Dorsolateral prefrontal cortex (tissue), 120 donors: ENCODE measurements at regions of chr19 and their contacts with region 1.

Region 1: GRCh38 chr19:57632987-57633831 is at the start of gene ZNF211:
- DNase-seq: peak; percentile 90 to 96 (median 94)
- H3K4me3 ChIP-seq: peak within 1 kb of the TSS; percentile 68 to 99 (median 90)
- H3K27ac ChIP-seq: peak within 1 kb of the TSS in 57 of 59 donors; percentile 33 to 92 (median 80)
- H3K27me3 ChIP-seq: no peaks in the 10 kb centered on the region
- CTCF ChIP-seq: peak in 46 of 56 donors; percentile 7 to 63 (median 40)
- total RNA-seq, gene ZNF211: 14.6 to 37.0 (median 23.5) TPM

Region 2: GRCh38 chr19:57566396-57567265 is 66.6 kb before region 1 on chr19:
- intact Hi-C with region 1: no loop called
- DNase-seq: no peak
- H3K4me3 ChIP-seq: no peak overlapping the region
- H3K27ac ChIP-seq: no peak overlapping the region
- H3K27me3 ChIP-seq: no peaks in the 10 kb centered on the region
- CTCF ChIP-seq: no peak

Region 3: DNA sequence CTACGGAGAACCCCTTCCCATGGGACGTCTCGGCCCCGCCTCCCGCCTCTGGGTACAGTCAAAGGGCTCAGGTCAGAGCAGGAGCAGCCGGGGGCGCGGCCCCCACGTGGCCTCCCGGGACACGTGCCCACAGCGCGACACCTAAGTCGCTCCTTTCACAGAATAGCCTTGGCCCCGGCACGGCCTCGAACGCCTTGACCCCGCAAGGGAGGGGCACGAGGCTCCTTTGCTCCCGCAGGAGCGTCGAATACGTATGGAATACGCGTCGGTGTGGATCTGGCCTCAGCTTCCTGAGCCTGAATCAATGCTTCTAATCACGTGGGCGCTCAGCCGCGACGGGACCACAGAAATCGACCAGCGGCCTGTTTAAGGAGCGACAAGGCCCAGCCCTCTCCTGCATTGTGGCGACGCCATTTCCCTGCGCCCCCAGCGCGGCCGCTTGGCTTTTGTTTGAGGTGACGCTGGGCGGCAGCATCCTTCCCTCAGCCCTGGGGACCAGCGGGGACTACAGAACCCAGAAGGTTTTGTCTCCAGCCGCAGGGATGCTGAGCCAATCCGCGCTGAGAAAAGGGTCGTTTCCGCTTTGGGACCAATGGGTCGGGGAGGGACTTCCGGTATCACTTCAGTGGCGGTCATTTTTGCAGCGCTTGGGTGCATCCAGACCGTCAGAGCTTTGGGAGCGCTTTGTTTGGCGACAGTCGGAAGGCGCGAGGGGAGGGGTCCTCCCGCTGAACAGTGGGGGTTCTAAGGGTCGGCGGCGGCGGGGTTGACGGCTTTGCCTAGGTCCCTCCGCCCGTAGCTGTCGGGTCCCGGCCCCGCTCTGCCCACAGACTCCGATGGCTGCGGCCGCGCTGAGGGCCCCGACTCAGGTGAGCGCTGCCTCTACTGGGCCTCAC is 49.4 kb before region 1 on chr19 and contains the start of gene ZIK1:
- intact Hi-C with region 1: loop called in 1 of 2 experiments (anchors 5 kb)
- DNase-seq: peak; percentile 90 to 98 (median 96)
- H3K4me3 ChIP-seq: peak within 1 kb of the TSS; percentile 59 to 94 (median 82)
- H3K27ac ChIP-seq: peak within 1 kb of the TSS in 48 of 59 donors; percentile 21 to 93 (median 75)
- H3K27me3 ChIP-seq: no peaks in the 10 kb centered on the region
- CTCF ChIP-seq: peak in 53 of 56 donors; percentile 3 to 65 (median 45)
- total RNA-seq, gene ZIK1: 3.1 to 9.5 (median 6.6) TPM

Region 4: DNA sequence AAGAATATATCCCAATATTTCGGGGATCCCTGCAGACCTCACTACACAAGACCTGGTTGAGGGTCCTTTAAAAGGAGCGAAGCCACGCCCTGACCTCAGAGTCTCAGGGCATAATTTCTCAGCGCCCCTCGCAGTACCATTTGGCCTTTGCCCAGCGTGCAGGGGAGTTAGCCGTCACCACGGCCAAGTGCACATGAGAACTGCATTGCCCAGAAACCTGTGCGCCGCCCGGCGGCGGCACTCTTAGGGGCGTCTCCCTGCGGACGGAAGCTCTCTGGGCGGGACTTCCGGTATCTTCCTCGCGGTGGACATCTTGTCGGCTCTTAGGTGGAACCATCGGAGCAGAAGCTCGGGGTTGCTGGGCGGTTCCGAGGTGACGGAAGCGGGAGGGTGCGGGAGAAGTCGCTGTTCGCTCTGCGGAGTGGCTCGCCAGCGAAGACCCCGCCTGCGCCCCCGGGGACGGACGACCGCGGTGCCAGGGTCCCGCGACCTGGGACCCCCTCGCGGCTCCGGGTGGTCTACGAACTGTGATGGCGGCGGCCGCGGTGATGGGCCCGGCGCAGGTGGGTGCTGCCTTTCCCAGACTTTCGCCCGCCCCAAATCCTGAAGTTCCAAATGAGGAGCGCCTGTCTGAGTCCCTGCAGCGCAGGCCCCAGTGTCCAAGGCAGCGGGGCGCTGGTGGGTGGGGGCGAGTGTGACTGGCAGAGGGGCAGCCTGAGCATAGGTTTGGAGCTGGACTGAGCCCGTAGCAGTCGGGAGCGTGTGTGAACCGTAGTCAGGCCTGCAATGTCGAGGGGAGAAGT is 19.1 kb before region 1 on chr19 and contains the start of gene ZNF134:
- intact Hi-C with region 1: loop called in 1 of 2 experiments (anchors 2 kb)
- DNase-seq: peak; percentile 82 to 95 (median 92)
- H3K4me3 ChIP-seq: peak within 1 kb of the TSS; percentile 66 to 100 (median 97)
- H3K27ac ChIP-seq: peak within 1 kb of the TSS in 37 of 59 donors; percentile 3 to 83 (median 60)
- H3K27me3 ChIP-seq: no peaks in the 10 kb centered on the region
- CTCF ChIP-seq: peak in 53 of 56 donors; percentile 21 to 78 (median 52)
- total RNA-seq, gene ZNF134: 15.1 to 32.3 (median 22.0) TPM